ENCODE measurements at regions of chr7 and their contacts with region 1.

Region 1: GRCh38 chr7:77657427-77658224 is 38.6 kb upstream of the RSBN1L start:
- DNase-seq: peak; percentile 12
- ATAC-seq: peak; percentile 87
- H3K4me3 ChIP-seq: no peak overlapping the region
- H3K27ac ChIP-seq: no peak overlapping the region
- H3K4me1 ChIP-seq: no peaks in the 10 kb centered on the region
- H3K27me3 ChIP-seq: no peaks in the 10 kb centered on the region
- CTCF ChIP-seq: peak; percentile 50 to 67 (median 54)
- EP300 ChIP-seq: no peak
- POLR2A ChIP-seq: no peak
- RAD21 ChIP-seq: peak; percentile 94

Region 2: DNA sequence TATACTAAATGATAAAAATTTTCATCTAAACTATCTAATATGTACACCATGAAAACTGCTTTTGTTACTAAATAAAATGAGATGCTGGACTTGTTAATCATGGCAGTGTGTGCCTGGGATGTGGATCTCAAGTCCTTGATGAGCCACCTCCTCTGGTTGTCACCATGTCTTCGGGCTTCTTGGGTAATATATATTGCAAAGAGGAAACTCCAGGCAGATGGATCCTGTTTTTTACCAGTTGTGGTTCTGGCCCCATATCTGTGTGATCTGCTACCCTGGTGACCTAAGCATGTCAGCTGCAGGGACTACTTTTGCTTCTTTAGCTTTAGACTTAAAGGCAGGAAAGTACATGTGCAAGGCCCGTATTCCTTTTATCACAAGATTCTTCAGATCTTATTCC is 94.4 kb after region 1 on chr7:
- CTCF ChIA-PET with region 1: interaction called, 218 read pairs
- POLR2A ChIA-PET with region 1: no interaction called
- RAD21 ChIA-PET with region 1: interaction called, 32 read pairs
- SMC1A ChIA-PET with region 1: interaction called, 56 read pairs
- in situ Hi-C with region 1: loop called (anchors 5 kb)
- intact Hi-C with region 1: no loop called
- DNase-seq: no peak
- ATAC-seq: no peak
- H3K4me3 ChIP-seq: no peak overlapping the region
- H3K27ac ChIP-seq: no peak overlapping the region
- H3K4me1 ChIP-seq: no peaks in the 10 kb centered on the region
- H3K27me3 ChIP-seq: no peaks in the 10 kb centered on the region
- CTCF ChIP-seq: no peak
- EP300 ChIP-seq: no peak
- POLR2A ChIP-seq: no peak
- RAD21 ChIP-seq: no peak

Region 3: DNA sequence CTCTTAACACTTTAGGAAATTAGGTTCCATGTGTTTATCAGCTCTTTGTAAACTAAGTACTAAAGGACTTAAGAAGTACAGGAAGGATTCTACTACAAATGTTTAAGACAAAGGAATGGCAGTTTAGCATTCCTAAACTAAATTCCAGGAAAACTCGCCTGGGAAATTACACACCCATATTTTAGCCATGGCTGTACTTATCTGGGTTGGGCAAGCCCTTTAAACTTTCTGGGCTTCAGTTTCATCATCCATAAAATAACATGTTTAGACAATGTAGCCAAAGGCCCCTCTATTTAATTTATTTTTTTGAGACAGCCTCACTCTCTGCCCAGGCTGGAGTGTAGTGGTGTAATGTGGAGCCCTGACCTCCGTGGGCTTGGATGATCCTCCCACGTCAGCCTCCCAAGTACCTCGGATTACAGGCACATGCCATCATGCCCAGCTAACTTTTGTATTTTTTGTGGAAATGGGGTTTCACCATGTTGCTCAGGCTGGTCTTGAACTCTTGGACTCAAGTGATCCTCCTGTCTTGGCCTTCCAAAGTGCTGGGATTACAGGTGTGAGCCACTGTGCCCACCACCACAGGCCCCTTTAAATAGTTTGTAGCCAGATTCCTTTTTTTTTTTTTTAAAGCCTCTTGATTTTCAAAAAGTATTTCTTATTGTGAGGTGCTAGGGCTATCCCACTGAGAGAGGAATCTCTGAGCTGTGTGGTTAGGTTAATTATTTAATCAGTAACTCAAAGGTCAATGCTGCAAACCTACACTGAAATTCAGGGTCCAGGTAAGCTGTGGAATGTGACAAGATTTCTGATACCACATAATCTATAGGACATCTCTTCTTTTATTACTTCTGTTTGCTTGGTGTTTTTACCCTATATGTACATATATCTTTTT is 108.5 kb after region 1 on chr7:
- CTCF ChIA-PET with region 1: interaction called, 225 read pairs
- POLR2A ChIA-PET with region 1: no interaction called
- RAD21 ChIA-PET with region 1: interaction called, 58 read pairs
- SMC1A ChIA-PET with region 1: interaction called, 75 read pairs
- in situ Hi-C with region 1: no loop called
- intact Hi-C with region 1: no loop called
- DNase-seq: no peak
- ATAC-seq: no peak
- H3K4me3 ChIP-seq: no peak overlapping the region
- H3K27ac ChIP-seq: no peak overlapping the region
- H3K4me1 ChIP-seq: no peaks in the 10 kb centered on the region
- H3K27me3 ChIP-seq: no peaks in the 10 kb centered on the region
- CTCF ChIP-seq: no peak
- EP300 ChIP-seq: no peak
- POLR2A ChIP-seq: no peak
- RAD21 ChIP-seq: no peak

Region 4: DNA sequence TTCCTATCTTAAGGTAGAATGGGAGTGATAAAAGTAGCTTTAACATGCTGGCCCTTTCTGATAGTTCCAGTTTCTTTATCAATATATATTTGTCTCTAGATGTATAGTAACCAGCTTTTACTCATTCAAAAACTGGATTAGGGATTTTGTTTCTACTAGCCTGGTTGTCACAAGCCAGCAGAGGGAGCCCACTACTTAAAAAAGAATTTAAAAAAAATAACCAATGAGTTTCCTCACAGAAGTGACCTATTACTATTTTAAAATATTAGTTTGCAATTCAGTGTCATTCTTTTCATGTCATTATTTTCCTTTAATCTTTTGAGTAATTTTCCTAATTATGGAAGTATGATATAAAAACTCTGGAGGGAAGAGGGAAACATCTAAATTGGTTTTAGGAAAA is 283.0 kb after region 1 on chr7:
- CTCF ChIA-PET with region 1: interaction called, 22 read pairs
- POLR2A ChIA-PET with region 1: no interaction called
- RAD21 ChIA-PET with region 1: interaction called, 6 read pairs
- SMC1A ChIA-PET with region 1: interaction called, 17 read pairs
- in situ Hi-C with region 1: loop called (anchors 10 kb)
- intact Hi-C with region 1: loop called (anchors 5 kb)
- DNase-seq: no peak
- ATAC-seq: peak; percentile 75
- H3K4me3 ChIP-seq: no peak overlapping the region
- H3K27ac ChIP-seq: no peak overlapping the region
- H3K4me1 ChIP-seq: no peaks in the 10 kb centered on the region
- H3K27me3 ChIP-seq: no peaks in the 10 kb centered on the region
- CTCF ChIP-seq: peak; percentile 44 to 66 (median 53); a peak in 5 of 6 replicates
- EP300 ChIP-seq: no peak
- POLR2A ChIP-seq: no peak
- RAD21 ChIP-seq: peak; percentile 73